Ascending aorta (tissue), 2 donors: ENCODE measurements at regions of chr2 and their contacts with region 1.

Region 1: GRCh38 chr2:39227628-39228412 is 15.9 kb downstream of the CDKL4 start:
- DNase-seq: peak in 1 of 2 donors; percentile 82
- H3K4me3 ChIP-seq: peak overlapping the region in 1 of 2 donors; percentile 59
- H3K27ac ChIP-seq: no peak overlapping the region
- H3K4me1 ChIP-seq: peaks cover 0 to 9% of the 10 kb centered on the region in 2 donors
- H3K27me3 ChIP-seq: no peaks in the 10 kb centered on the region
- CTCF ChIP-seq: peak; percentile 74 to 82 (median 77)

Region 2: DNA sequence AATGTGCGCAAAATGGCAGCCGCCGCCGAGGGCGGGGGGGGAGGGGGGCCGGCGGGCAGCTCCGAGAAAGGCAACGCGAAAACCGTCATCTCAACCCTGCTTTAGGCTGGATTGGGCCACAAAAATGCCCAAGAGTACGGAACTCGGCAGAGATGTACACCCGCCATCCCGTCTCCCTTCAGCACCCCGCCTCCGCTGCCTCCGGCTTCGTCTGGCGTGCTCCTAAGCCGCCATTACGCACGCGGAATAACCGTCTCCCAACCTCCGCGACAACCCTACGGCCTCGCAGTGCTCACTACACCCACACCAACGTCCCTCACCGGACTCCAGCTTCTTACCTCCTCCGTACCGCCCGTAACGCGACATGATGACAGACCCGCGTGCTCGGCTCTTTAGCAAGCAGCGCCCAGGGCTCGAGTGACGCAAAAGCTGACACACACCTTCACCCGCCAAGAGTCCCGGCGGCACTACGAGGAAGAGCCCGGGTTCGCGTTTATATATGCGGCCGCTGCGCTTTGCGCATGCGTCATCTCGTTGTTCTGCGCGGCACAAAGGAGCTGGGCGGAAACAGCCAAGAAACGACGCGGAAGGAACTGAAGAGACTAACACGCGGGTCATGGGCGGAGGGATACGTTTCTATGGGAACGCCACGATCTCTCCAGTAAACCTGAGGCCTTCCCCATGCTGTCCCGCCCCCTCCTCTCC is 476.8 kb before region 1 on chr2 and contains the start of gene SRSF7:
- intact Hi-C with region 1: no loop called
- DNase-seq: peak; percentile 89 to 99
- H3K4me3 ChIP-seq: peak within 1 kb of the TSS; percentile 71 to 90
- H3K27ac ChIP-seq: peak within 1 kb of the TSS; percentile 87 to 98
- H3K4me1 ChIP-seq: peaks cover 5 to 28% of the 10 kb centered on the region in 2 donors
- H3K27me3 ChIP-seq: no peaks in the 10 kb centered on the region
- CTCF ChIP-seq: no peak
- total RNA-seq, gene SRSF7: 54.1 TPM

Region 3: GRCh38 chr2:38935568-38936172 is 292.1 kb before region 1 on chr2:
- intact Hi-C with region 1: no loop called
- DNase-seq: no peak
- H3K4me3 ChIP-seq: no peak overlapping the region
- H3K27ac ChIP-seq: no peak overlapping the region
- H3K4me1 ChIP-seq: no peaks in the 10 kb centered on the region
- H3K27me3 ChIP-seq: no peaks in the 10 kb centered on the region
- CTCF ChIP-seq: no peak

Region 4: DNA sequence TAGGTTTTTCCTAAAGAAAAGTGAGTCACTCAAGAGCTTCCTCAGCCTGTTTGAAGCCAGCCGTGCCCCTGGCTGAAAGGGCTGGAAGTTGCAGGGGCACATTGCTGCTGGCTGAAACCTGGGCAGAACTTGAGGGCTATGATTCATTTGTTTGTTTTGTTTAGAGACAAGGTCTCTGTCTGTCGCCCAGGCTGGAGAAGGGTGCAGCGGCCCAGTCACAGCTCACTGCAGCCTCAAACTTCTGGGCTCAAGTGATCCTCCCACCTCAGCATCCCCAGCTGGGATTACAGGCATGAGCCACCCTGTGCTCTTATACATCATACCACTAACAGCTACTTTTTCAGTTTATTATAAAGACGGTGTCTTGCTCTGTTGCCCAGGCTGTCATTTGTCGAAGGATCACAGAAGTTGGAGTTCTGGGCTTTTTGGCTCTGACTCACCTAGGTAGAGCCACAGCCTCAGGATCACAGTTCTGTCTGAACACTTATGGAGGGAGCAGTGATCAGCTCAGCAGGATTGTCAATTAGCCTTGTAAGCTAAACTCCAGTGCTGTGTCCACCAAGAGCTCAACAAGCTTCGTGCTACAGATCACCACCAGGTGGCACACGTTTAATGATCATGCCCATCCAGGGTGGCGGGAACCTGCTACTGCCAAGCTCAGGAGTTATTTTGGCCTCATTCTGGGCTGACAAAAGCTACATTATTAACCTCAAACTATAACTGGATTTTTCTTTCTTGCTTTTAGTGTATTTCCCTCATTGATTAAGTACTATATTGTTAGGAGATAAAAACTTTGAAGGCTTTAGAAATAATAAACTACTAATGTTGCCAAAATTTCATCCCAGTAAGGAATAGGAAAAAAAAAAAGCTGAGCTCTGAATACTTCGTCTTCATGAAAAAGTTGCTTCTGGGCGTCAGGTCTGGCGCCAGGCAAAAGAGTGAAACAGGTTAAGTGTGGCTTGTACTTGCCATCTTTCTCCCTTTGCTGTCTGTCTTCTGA is 280.3 kb before region 1 on chr2:
- intact Hi-C with region 1: loop called (anchors 2 kb)
- DNase-seq: peak; percentile 14 to 81
- H3K4me3 ChIP-seq: no peak overlapping the region
- H3K27ac ChIP-seq: no peak overlapping the region
- H3K4me1 ChIP-seq: no peaks in the 10 kb centered on the region
- H3K27me3 ChIP-seq: no peaks in the 10 kb centered on the region
- CTCF ChIP-seq: peak; percentile 42 to 76 (median 62)

Region 5: GRCh38 chr2:38975042-38975441 is 252.8 kb before region 1 on chr2:
- intact Hi-C with region 1: no loop called
- DNase-seq: no peak
- H3K4me3 ChIP-seq: no peak overlapping the region
- H3K27ac ChIP-seq: no peak overlapping the region
- H3K4me1 ChIP-seq: no peaks in the 10 kb centered on the region
- H3K27me3 ChIP-seq: no peaks in the 10 kb centered on the region
- CTCF ChIP-seq: no peak

Region 6: DNA sequence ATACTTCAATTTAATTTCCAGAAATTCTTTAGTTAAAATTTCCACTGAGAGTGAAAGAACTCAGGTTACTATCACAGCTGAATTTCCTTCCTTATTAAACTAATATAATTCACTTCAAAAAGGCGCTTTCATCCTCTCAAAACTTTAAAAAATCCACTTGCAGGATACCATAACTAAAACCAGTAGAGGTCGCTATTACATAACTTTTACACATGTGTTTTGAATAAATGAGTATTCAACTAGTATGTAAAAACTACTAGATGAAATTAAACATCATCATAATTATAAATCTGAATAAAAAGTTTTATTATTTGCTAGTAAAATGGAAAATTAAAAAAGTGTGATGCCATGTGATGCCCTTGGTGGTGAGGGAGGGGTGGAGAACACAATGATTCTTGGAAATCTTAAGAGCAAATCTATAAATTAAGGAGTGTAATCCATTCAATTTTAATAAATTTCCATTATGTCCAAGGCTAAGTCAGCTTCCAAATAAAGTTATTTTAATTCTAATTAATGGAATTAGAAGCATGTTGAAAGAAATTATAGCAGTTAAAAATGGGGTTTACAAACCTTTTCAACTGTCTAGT is 168.4 kb before region 1 on chr2:
- intact Hi-C with region 1: loop called (anchors 1 kb)
- DNase-seq: no peak
- H3K4me3 ChIP-seq: no peak overlapping the region
- H3K27ac ChIP-seq: no peak overlapping the region
- H3K4me1 ChIP-seq: no peaks in the 10 kb centered on the region
- H3K27me3 ChIP-seq: no peaks in the 10 kb centered on the region
- CTCF ChIP-seq: peak; percentile 56 to 74 (median 63)

Region 7: GRCh38 chr2:39156107-39156506 is 71.7 kb before region 1 on chr2:
- intact Hi-C with region 1: loop called (anchors 5 kb)
- DNase-seq: no peak
- H3K4me3 ChIP-seq: no peak overlapping the region
- H3K27ac ChIP-seq: no peak overlapping the region
- H3K4me1 ChIP-seq: peaks cover 0 to 25% of the 10 kb centered on the region in 2 donors
- H3K27me3 ChIP-seq: no peaks in the 10 kb centered on the region
- CTCF ChIP-seq: no peak